ENCODE measurements at regions of chr12 and their contacts with region 1.

Region 1: DNA sequence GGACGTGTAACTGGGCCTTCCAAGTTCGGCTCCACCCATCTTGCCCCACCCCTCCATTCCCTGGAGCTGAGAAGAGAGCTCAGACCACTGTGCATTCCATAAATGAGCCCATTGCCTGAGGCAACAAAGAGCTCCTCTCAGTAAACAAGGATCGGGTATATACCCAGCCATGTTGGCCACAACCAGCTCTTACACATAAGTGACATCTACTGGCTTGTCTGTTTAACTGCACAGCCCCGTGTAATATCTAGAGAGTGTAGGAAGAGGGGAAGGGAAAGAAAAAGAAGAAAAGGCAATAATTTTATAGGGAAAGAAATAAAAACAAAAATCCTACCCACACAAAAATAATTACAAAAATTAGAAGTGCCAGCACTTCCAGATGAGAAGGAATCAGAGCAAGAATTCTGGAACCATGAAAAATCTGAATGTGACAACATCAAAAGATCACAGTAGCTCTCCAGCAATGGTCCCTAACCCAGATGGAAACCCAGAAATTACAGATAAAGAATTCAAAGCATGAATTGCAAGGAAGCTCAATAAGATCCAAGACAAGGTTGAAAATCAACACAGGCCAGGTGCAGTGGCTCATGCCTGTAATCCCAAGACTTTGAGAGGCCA is 308.1 kb downstream of the RPAP3 start:
- DNase-seq: no peak
- H3K4me3 ChIP-seq: no peak overlapping the region
- H3K27ac ChIP-seq: no peak overlapping the region
- H3K4me1 ChIP-seq: peaks cover 0 to 5% of the 10 kb centered on the region in 2 donors
- H3K27me3 ChIP-seq: no peaks in the 10 kb centered on the region
- CTCF ChIP-seq: peak in 2 of 3 experiments; percentile 29 to 35

Region 2: DNA sequence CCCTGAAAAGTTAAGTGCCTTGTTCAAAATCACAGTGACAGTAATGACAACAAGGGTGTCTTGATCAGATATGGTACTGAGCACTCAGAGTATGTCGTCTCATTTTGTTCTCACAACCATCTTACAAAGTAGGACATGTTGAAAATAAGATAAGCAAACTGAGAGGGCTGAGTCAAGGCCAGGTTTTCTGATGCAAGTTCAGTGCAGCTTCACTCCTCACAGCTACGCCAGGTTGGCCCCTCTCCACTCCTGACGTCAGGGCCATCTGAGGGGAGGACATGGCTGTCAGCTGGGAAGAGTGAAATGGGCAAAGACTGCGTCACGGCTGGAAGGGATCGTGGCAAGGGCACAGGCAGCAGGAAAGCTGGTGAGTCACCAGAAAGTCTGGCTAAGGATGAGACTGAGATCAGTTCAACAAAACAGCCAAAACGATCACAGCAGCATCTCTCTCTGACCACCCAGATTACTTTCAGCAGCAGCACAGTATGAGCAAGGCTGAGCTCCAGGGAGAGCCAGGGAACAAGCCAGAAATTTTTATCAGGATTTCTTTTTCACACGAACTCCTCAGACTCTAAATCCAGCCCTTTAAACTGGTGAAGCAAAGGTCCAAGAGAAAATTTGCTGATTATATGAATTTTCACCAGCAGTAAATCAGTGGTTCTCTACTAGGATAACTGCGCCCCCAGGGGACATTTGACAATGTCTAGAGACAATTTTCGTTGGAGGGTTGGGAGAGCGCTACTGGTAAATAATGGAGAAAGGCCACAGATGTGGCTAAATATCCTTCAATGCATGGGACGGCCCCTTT is 20.2 kb before region 1 on chr12:
- intact Hi-C with region 1: loop called (anchors 2 kb)
- DNase-seq: peak; percentile 95 to 99
- H3K4me3 ChIP-seq: peak overlapping the region in 1 of 2 donors; percentile 23
- H3K27ac ChIP-seq: peak overlapping the region; percentile 85 to 91
- H3K4me1 ChIP-seq: peaks cover 0 to 13% of the 10 kb centered on the region in 2 donors
- H3K27me3 ChIP-seq: no peaks in the 10 kb centered on the region
- CTCF ChIP-seq: no peak

Region 3: GRCh38 chr12:47419497-47419896 is 21.7 kb after region 1 on chr12:
- intact Hi-C with region 1: no loop called
- DNase-seq: no peak
- H3K4me3 ChIP-seq: no peak overlapping the region
- H3K27ac ChIP-seq: no peak overlapping the region
- H3K4me1 ChIP-seq: peaks cover 0 to 4% of the 10 kb centered on the region in 2 donors
- H3K27me3 ChIP-seq: no peaks in the 10 kb centered on the region
- CTCF ChIP-seq: no peak

Region 4: GRCh38 chr12:47481041-47481440 is 83.3 kb after region 1 on chr12:
- intact Hi-C with region 1: no loop called
- DNase-seq: no peak
- H3K4me3 ChIP-seq: no peak overlapping the region
- H3K27ac ChIP-seq: no peak overlapping the region
- H3K4me1 ChIP-seq: no peaks in the 10 kb centered on the region
- H3K27me3 ChIP-seq: no peaks in the 10 kb centered on the region
- CTCF ChIP-seq: no peak

Region 5: DNA sequence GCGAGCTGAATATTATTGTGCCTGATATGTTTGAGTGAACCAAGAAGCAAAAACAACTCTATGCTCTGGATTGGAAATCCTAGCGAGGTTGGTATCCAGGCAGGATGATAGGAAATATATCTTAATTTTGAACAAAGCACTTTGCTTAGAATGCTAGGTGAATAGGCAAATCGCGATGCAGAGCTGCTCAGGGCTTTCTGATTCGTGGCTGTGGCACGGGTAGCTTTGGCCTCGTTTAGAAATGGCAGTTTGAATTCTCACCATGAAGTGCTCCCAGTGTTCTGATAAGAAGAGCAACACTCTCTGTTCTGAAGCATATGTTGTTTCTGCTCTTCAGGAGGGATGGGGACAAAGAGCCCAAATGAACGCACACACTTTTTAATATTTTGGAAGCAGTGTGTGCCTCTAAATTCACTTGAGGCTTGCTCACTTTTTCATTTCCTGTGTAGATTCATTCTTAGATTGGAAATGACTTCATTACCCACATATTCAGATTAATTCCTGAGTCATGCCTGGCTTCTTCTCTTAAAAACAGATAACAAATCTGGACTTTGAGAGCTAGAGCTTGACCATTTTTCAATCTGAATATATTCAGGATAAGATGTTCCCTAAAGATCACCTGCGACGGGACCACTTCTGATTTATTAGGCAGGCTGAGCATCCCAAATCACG is 107.1 kb after region 1 on chr12:
- intact Hi-C with region 1: loop called (anchors 10 kb)
- DNase-seq: no peak
- H3K4me3 ChIP-seq: peak overlapping the region in 1 of 2 donors; percentile 36
- H3K27ac ChIP-seq: peak overlapping the region; percentile 76 to 82
- H3K4me1 ChIP-seq: peaks cover 0 to 12% of the 10 kb centered on the region in 2 donors
- H3K27me3 ChIP-seq: no peaks in the 10 kb centered on the region
- CTCF ChIP-seq: no peak

Measured in ascending aorta (tissue), 2 donors.